ENCODE measurements at regions of chr1 and their contacts with region 1.

Region 1: DNA sequence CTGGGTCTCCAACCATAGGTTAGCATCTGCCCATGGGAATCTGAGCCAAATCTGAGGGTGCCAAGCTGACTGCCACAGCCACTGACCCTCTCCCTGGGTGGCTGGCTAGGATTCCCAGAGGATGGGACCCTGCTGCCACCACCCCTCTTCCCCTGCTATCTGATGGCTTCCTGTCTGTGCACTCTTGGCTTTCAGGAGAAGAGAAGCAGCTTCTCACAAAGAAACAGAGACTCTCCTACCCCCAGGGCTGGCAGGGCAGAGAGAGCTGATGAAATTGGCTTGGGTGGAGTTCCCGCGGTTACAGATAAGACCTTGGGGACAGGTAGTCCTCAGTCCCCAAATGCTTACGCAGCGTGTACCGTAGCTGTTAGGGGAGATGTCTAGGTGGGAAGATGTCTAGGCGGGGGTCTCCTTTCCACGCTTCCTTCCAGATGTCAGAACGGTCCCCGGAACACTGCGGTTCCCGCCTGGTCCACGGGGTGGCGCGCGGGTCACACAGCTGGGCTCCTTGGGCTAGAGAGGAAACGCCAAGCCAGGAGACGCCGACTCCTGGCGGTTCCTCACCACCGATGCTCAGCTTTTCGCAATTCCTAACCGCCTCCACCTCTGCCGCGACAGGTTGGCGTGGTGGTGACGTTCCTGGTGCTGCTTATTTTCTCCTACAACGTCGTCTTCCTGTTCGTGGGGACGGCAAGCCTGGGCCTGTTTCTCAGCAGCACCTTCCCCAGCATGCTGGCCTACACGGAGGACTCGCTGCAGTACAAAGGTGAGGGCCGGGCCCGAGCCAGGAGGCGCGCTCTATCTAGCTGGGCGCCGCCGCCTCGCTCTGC is 40.1 kb downstream of the ELK4 start:
- DNase-seq: peak; percentile 85 to 98
- H3K4me3 ChIP-seq: no peak overlapping the region
- CTCF ChIP-seq: peak in 1 of 3 donors; percentile 95
- POLR2A ChIP-seq: no peak

Region 2: GRCh38 chr1:204769997-204770396 is 821.7 kb before region 1 on chr1:
- intact Hi-C with region 1: loop called (anchors 10 kb)
- DNase-seq: no peak
- H3K4me3 ChIP-seq: no peak overlapping the region
- CTCF ChIP-seq: no peak
- POLR2A ChIP-seq: no peak

Region 3: GRCh38 chr1:205631727-205632373 is 40.1 kb after region 1 on chr1 and contains the start of gene ELK4:
- intact Hi-C with region 1: loop called (anchors 1 kb)
- DNase-seq: peak; percentile 97 to 100
- H3K4me3 ChIP-seq: peak within 1 kb of the TSS; percentile 72
- CTCF ChIP-seq: peak in 2 of 3 donors; percentile 80
- POLR2A ChIP-seq: peak in 1 of 2 donors; percentile 23
- total RNA-seq, gene ELK4: 24.1 to 44.2 (median 28.3) TPM

Region 4: GRCh38 chr1:205658943-205659581 is 67.3 kb after region 1 on chr1:
- intact Hi-C with region 1: loop called (anchors 5 kb)
- DNase-seq: peak; percentile 71 to 94
- H3K4me3 ChIP-seq: no peak overlapping the region
- CTCF ChIP-seq: peak in 1 of 3 donors; percentile 78
- POLR2A ChIP-seq: no peak

Measured in lower leg skin (tissue), 4 donors.